HepG2 (cell line): ENCODE measurements at regions of chr15 and their contacts with region 1.

Region 1: GRCh38 chr15:45634442-45635190 is at the start of gene SQOR:
- DNase-seq: peak; percentile 68
- ATAC-seq: peak; percentile 88
- H3K4me3 ChIP-seq: peak within 1 kb of the TSS; percentile 72 to 90 (median 89)
- H3K27ac ChIP-seq: peak within 1 kb of the TSS; percentile 61
- H3K4me1 ChIP-seq: peaks cover 27% of the 10 kb centered on the region
- H3K27me3 ChIP-seq: no peaks in the 10 kb centered on the region; a peak in 1 of 5 replicates
- CTCF ChIP-seq: peak; percentile 46
- EP300 ChIP-seq: peak in 1 of 2 experiments; percentile 36; a peak in 1 of 4 replicates
- POLR2A ChIP-seq: peak; percentile 68 to 73
- RAD21 ChIP-seq: no peak
- total RNA-seq, gene SQOR: 19.4 and 25.9 TPM in 2 replicates

Region 2: GRCh38 chr15:45705510-45706473 is 71.2 kb after region 1 on chr15:
- CTCF ChIA-PET with region 1: interaction called, 3 read pairs
- POLR2A ChIA-PET with region 1: no interaction called
- in situ Hi-C with region 1: no loop called
- intact Hi-C with region 1: loop called (anchors 1 kb)
- DNase-seq: peak; percentile 68
- ATAC-seq: peak; percentile 90
- H3K4me3 ChIP-seq: peak overlapping the region; percentile 57 to 70 (median 68)
- H3K27ac ChIP-seq: no peak overlapping the region
- H3K4me1 ChIP-seq: peaks cover 6% of the 10 kb centered on the region; the same call in 1 of the 2 replicates
- H3K27me3 ChIP-seq: no peaks in the 10 kb centered on the region
- CTCF ChIP-seq: peak; percentile 90
- EP300 ChIP-seq: no peak
- POLR2A ChIP-seq: no peak
- RAD21 ChIP-seq: peak; percentile 77

Region 3: DNA sequence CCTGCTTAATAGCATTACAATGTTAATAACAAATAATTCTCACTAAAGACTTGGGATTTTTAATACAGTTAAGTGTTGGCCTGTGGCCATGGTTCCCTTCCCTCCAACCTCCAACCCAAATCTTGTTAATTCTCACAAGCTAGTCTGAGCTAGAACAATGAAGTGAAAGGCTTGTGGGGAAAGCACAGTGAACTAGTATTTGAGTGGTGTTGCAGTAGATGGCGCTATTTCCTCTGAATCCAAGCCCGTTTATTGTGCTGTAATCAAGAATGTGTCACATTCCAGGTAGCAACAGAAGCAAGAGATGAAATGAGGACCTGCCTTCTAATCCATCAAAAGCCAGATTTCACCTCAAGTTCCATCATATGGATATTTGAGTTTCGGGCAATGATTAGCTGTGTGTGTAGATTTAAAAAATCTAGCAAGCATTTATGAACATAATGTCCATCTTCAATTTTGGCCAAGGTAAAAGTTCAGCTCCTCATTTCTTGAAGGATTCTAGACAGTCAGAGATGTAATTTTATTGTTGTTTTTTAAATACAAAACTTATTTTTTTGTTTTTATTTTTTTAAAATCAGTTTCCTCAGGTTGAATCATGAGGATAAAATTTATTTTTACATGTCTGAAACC is 160.9 kb after region 1 on chr15:
- CTCF ChIA-PET with region 1: no interaction called
- POLR2A ChIA-PET with region 1: no interaction called
- in situ Hi-C with region 1: no loop called
- intact Hi-C with region 1: loop called (anchors 5 kb)
- DNase-seq: peak; percentile 52
- ATAC-seq: peak; percentile 83
- H3K4me3 ChIP-seq: peak overlapping the region in 2 of 3 experiments; percentile 16 to 32; a peak in 1 of 6 replicates
- H3K27ac ChIP-seq: no peak overlapping the region
- H3K4me1 ChIP-seq: peaks cover 35% of the 10 kb centered on the region
- H3K27me3 ChIP-seq: no peaks in the 10 kb centered on the region
- CTCF ChIP-seq: peak; percentile 80
- EP300 ChIP-seq: no peak
- POLR2A ChIP-seq: no peak
- RAD21 ChIP-seq: no peak; the same call in 1 of the 2 replicates